GM12878 (cell line): ENCODE measurements at regions of chr7 and their contacts with region 1.

Region 1: GRCh38 chr7:128425850-128426249 is 16.1 kb upstream of the IMPDH1 start:
- DNase-seq: no peak
- ATAC-seq: peak; percentile 72
- H3K4me3 ChIP-seq: no peak overlapping the region
- H3K27ac ChIP-seq: no peak overlapping the region
- H3K4me1 ChIP-seq: peaks cover 5% of the 10 kb centered on the region
- H3K27me3 ChIP-seq: no peaks in the 10 kb centered on the region
- CTCF ChIP-seq: peak; percentile 79 to 92 (median 92)
- EP300 ChIP-seq: no peak
- POLR2A ChIP-seq: no peak
- RAD21 ChIP-seq: peak; percentile 74

Region 2: DNA sequence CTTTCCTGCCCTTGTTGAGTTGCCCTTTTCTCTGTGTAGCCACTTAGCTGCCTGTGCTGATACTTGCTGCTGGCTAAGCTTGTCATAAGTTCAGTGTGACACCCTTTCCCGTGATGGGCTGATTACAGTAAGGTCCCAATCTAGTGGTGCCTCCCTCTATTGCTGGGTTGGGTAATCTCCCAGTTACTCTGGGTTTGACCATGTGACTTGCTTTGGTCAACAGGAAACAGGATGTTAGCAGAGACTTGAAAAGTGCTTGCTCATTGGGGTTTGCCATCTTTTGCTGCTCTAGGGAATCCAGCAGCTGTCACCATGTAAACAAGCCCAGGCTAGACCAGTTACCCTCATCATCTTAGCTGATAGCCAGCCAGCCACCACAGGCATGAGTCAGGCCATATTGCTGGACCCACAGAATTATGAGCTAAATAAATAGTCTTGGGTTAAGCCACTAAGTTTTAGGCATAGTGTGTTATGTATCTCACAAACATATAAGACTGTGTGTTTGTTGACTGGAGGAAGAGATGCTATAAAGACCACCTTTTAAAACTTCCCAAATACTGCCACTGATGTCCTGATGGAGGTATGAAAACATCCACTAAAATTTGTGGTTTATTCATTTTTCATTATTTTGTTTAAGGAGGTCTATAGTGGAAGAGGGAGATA is 188.8 kb before region 1 on chr7:
- CTCF ChIA-PET with region 1: no interaction called
- POLR2A ChIA-PET with region 1: no interaction called
- RAD21 ChIA-PET with region 1: no interaction called
- SMC1A ChIA-PET with region 1: no interaction called
- in situ Hi-C with region 1: no loop called
- intact Hi-C with region 1: no loop called
- DNase-seq: peak; percentile 28
- ATAC-seq: peak; percentile 75
- H3K4me3 ChIP-seq: no peak overlapping the region
- H3K27ac ChIP-seq: no peak overlapping the region
- H3K4me1 ChIP-seq: no peaks in the 10 kb centered on the region
- H3K27me3 ChIP-seq: no peaks in the 10 kb centered on the region
- CTCF ChIP-seq: no peak
- EP300 ChIP-seq: no peak
- POLR2A ChIP-seq: no peak
- RAD21 ChIP-seq: no peak

Region 3: DNA sequence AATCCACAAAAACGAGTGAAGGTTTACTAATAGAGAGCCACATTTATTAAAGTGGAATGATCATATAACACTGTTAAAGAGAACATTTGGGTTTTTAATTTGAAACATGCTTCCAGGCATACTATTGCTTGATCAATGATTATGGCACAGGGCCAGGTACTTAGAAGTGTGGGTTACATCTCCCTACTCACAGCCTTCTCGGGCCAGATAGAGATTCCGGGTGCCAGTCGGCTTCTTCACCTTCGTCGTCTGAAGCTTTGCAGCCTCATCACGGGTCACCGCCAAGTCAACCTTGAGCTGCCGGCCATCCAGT is 101.5 kb before region 1 on chr7:
- CTCF ChIA-PET with region 1: interaction called, 12 read pairs
- POLR2A ChIA-PET with region 1: no interaction called
- RAD21 ChIA-PET with region 1: no interaction called
- SMC1A ChIA-PET with region 1: no interaction called
- in situ Hi-C with region 1: no loop called
- intact Hi-C with region 1: no loop called
- DNase-seq: no peak
- ATAC-seq: no peak
- H3K4me3 ChIP-seq: no peak overlapping the region
- H3K27ac ChIP-seq: no peak overlapping the region
- H3K4me1 ChIP-seq: no peaks in the 10 kb centered on the region
- H3K27me3 ChIP-seq: no peaks in the 10 kb centered on the region
- CTCF ChIP-seq: no peak
- EP300 ChIP-seq: no peak
- POLR2A ChIP-seq: no peak
- RAD21 ChIP-seq: no peak

Region 4: DNA sequence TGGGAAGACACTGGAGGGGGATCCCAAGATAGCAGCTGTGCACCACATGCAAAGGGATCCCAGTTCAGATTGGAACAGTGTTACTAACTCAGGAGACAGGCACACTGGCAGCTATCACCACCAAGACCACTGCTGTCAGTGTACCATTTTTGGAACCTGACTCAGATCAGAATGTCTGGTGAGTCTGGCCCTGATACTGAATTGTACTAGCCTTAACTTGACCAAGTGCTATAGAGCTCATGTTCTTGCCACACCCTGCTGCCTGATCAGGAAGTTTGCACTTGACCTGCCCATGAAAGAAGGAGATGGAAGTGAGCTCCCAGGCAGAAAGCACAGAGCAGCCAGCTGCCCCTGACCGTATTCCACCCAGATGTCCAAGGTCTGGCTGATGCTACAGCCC is 59.5 kb before region 1 on chr7:
- CTCF ChIA-PET with region 1: no interaction called
- POLR2A ChIA-PET with region 1: no interaction called
- RAD21 ChIA-PET with region 1: no interaction called
- SMC1A ChIA-PET with region 1: no interaction called
- in situ Hi-C with region 1: no loop called
- intact Hi-C with region 1: no loop called
- DNase-seq: no peak
- ATAC-seq: no peak
- H3K4me3 ChIP-seq: no peak overlapping the region
- H3K27ac ChIP-seq: no peak overlapping the region
- H3K4me1 ChIP-seq: no peaks in the 10 kb centered on the region
- H3K27me3 ChIP-seq: peaks cover 9 to 25% of the 10 kb centered on the region in 2 experiments
- CTCF ChIP-seq: no peak
- EP300 ChIP-seq: no peak
- POLR2A ChIP-seq: no peak
- RAD21 ChIP-seq: no peak

Region 5: GRCh38 chr7:128387216-128388144 is 38.4 kb before region 1 on chr7:
- CTCF ChIA-PET with region 1: interaction called, 21 read pairs
- POLR2A ChIA-PET with region 1: no interaction called
- RAD21 ChIA-PET with region 1: interaction called, 4 read pairs
- SMC1A ChIA-PET with region 1: interaction called, 8 read pairs
- in situ Hi-C with region 1: no loop called
- intact Hi-C with region 1: no loop called
- DNase-seq: no peak
- ATAC-seq: peak; percentile 93
- H3K4me3 ChIP-seq: no peak overlapping the region
- H3K27ac ChIP-seq: no peak overlapping the region
- H3K4me1 ChIP-seq: no peaks in the 10 kb centered on the region
- H3K27me3 ChIP-seq: no peaks in the 10 kb centered on the region; a peak in 1 of 4 replicates
- CTCF ChIP-seq: peak; percentile 84 to 87 (median 85)
- EP300 ChIP-seq: no peak
- POLR2A ChIP-seq: no peak
- RAD21 ChIP-seq: peak; percentile 58

Region 6: GRCh38 chr7:128409596-128410160 is 16.2 kb before region 1 on chr7 and contains the start of gene IMPDH1:
- CTCF ChIA-PET with region 1: interaction called, 458 read pairs
- POLR2A ChIA-PET with region 1: no interaction called
- RAD21 ChIA-PET with region 1: interaction called, 23 read pairs
- SMC1A ChIA-PET with region 1: interaction called, 43 read pairs
- in situ Hi-C with region 1: no loop called
- intact Hi-C with region 1: no loop called
- DNase-seq: no peak
- ATAC-seq: peak; percentile 90
- H3K4me3 ChIP-seq: peak within 1 kb of the TSS; percentile 90
- H3K27ac ChIP-seq: no peak within 1 kb of the TSS
- H3K4me1 ChIP-seq: peaks cover 8% of the 10 kb centered on the region
- H3K27me3 ChIP-seq: no peaks in the 10 kb centered on the region; a peak in 1 of 4 replicates
- CTCF ChIP-seq: no peak
- EP300 ChIP-seq: no peak
- POLR2A ChIP-seq: peak; percentile 68
- RAD21 ChIP-seq: no peak
- polyA plus RNA-seq, gene IMPDH1: 0.50 to 1.5 TPM

Region 7: GRCh38 chr7:128437426-128438332 is 11.8 kb after region 1 on chr7:
- CTCF ChIA-PET with region 1: interaction called, 175 read pairs
- POLR2A ChIA-PET with region 1: interaction called, 5 read pairs
- RAD21 ChIA-PET with region 1: interaction called, 14 read pairs
- SMC1A ChIA-PET with region 1: interaction called, 55 read pairs
- in situ Hi-C with region 1: no loop called
- intact Hi-C with region 1: no loop called
- DNase-seq: no peak
- ATAC-seq: peak; percentile 74
- H3K4me3 ChIP-seq: no peak overlapping the region
- H3K27ac ChIP-seq: no peak overlapping the region
- H3K4me1 ChIP-seq: peaks cover 4% of the 10 kb centered on the region
- H3K27me3 ChIP-seq: no peaks in the 10 kb centered on the region
- CTCF ChIP-seq: no peak
- EP300 ChIP-seq: no peak
- POLR2A ChIP-seq: no peak
- RAD21 ChIP-seq: no peak

Region 8: GRCh38 chr7:128455551-128456254 is 29.9 kb after region 1 on chr7 and contains the start of gene HILPDA:
- CTCF ChIA-PET with region 1: interaction called, 463 read pairs
- POLR2A ChIA-PET with region 1: interaction called, 5 read pairs
- RAD21 ChIA-PET with region 1: interaction called, 216 read pairs
- SMC1A ChIA-PET with region 1: interaction called, 296 read pairs
- in situ Hi-C with region 1: loop called (anchors 5 kb)
- intact Hi-C with region 1: loop called (anchors 1 kb)
- DNase-seq: peak; percentile 91
- ATAC-seq: peak; percentile 90
- H3K4me3 ChIP-seq: peak within 1 kb of the TSS; percentile 78
- H3K27ac ChIP-seq: peak within 1 kb of the TSS; percentile 84
- H3K4me1 ChIP-seq: peaks cover 29% of the 10 kb centered on the region
- H3K27me3 ChIP-seq: no peaks in the 10 kb centered on the region
- CTCF ChIP-seq: no peak; a peak in 1 of 6 replicates
- EP300 ChIP-seq: peak; percentile 56 to 80; a peak in 3 of 4 replicates
- POLR2A ChIP-seq: peak; percentile 91
- RAD21 ChIP-seq: no peak
- polyA plus RNA-seq, gene HILPDA: 37.4 to 44.0 TPM

Region 9: GRCh38 chr7:128883622-128884501 is 458.0 kb after region 1 on chr7:
- CTCF ChIA-PET with region 1: interaction called, 14 read pairs
- POLR2A ChIA-PET with region 1: no interaction called
- RAD21 ChIA-PET with region 1: interaction called, 15 read pairs
- SMC1A ChIA-PET with region 1: no interaction called
- in situ Hi-C with region 1: no loop called
- intact Hi-C with region 1: loop called (anchors 5 kb)
- DNase-seq: peak; percentile 48
- ATAC-seq: peak; percentile 95
- H3K4me3 ChIP-seq: peak overlapping the region; percentile 70
- H3K27ac ChIP-seq: peak overlapping the region; percentile 74
- H3K4me1 ChIP-seq: peaks cover 12% of the 10 kb centered on the region
- H3K27me3 ChIP-seq: no peaks in the 10 kb centered on the region
- CTCF ChIP-seq: peak; percentile 90 to 96 (median 91)
- EP300 ChIP-seq: no peak; a peak in 1 of 4 replicates
- POLR2A ChIP-seq: peak; percentile 77
- RAD21 ChIP-seq: peak; percentile 81